Colonic mucosa (tissue), 4 donors: ENCODE measurements at regions of chr15 and their contacts with region 1.

Region 1: DNA sequence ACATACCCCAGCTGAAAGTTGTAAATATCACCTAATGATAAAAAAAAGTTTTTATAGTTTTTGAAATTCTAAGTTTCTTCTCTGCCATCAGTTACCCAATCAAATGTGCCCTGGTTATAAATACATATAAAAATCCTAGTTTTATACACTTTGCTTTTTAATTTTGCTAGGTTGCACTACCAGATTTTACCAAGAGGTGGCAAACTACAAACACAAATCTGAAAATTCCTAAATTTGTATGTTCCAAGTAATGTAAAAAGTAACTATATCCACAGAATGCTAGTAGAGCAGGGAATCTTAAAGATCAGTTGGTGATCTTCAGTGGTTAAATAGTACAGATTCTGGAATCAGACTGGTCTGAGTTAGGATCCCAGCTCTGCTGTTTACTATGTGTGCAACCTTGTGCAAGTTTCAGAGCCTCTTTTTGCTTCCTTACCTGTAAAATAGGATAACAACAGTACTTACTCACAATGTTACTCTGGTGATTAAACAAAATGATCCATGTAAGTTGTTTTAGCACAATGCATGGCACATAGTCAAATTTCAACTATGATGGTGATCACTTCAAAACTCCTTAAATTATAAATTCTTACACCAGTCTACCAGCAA is 11.0 kb downstream of the TRPM7 start:
- DNase-seq: no peak
- H3K4me3 ChIP-seq: no peak overlapping the region
- H3K27ac ChIP-seq: no peak overlapping the region
- H3K4me1 ChIP-seq: no peaks in the 10 kb centered on the region
- H3K27me3 ChIP-seq: no peaks in the 10 kb centered on the region
- CTCF ChIP-seq: peak; percentile 79

Region 2: GRCh38 chr15:50463423-50464358 is 211.9 kb before region 1 on chr15:
- intact Hi-C with region 1: no loop called
- DNase-seq: no peak
- H3K4me3 ChIP-seq: no peak overlapping the region
- H3K27ac ChIP-seq: no peak overlapping the region
- H3K4me1 ChIP-seq: no peaks in the 10 kb centered on the region
- H3K27me3 ChIP-seq: no peaks in the 10 kb centered on the region
- CTCF ChIP-seq: no peak

Region 3: GRCh38 chr15:50562735-50563640 is 112.7 kb before region 1 on chr15:
- intact Hi-C with region 1: no loop called
- DNase-seq: no peak
- H3K4me3 ChIP-seq: no peak overlapping the region
- H3K27ac ChIP-seq: no peak overlapping the region
- H3K4me1 ChIP-seq: no peaks in the 10 kb centered on the region
- H3K27me3 ChIP-seq: no peaks in the 10 kb centered on the region
- CTCF ChIP-seq: no peak

Region 4: DNA sequence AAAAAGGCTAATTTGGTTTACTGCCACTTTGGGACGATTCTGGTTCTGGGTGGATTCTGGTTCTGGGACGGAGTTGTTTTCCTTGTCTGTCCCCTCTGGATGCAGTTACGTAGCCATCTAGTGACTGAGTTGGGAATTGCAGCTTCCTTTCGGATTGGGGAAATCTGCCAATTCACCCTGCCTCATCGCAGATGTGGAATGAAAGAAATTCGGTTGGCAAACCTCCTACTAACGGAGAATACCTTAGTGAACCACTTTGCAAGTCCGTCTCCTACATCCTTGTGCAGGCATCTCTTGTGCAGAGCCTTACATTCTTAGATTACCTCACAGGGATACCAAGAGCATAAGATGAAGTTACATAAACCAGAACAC is 201.3 kb after region 1 on chr15:
- intact Hi-C with region 1: loop called (anchors 5 kb)
- DNase-seq: peak; percentile 92
- H3K4me3 ChIP-seq: peak overlapping the region; percentile 17
- H3K27ac ChIP-seq: peak overlapping the region; percentile 45
- H3K4me1 ChIP-seq: no peaks in the 10 kb centered on the region
- H3K27me3 ChIP-seq: no peaks in the 10 kb centered on the region
- CTCF ChIP-seq: peak; percentile 97